Endothelial cell of umbilical vein (primary cell): ENCODE measurements at regions of chr6 and their contacts with region 1.

Region 1: DNA sequence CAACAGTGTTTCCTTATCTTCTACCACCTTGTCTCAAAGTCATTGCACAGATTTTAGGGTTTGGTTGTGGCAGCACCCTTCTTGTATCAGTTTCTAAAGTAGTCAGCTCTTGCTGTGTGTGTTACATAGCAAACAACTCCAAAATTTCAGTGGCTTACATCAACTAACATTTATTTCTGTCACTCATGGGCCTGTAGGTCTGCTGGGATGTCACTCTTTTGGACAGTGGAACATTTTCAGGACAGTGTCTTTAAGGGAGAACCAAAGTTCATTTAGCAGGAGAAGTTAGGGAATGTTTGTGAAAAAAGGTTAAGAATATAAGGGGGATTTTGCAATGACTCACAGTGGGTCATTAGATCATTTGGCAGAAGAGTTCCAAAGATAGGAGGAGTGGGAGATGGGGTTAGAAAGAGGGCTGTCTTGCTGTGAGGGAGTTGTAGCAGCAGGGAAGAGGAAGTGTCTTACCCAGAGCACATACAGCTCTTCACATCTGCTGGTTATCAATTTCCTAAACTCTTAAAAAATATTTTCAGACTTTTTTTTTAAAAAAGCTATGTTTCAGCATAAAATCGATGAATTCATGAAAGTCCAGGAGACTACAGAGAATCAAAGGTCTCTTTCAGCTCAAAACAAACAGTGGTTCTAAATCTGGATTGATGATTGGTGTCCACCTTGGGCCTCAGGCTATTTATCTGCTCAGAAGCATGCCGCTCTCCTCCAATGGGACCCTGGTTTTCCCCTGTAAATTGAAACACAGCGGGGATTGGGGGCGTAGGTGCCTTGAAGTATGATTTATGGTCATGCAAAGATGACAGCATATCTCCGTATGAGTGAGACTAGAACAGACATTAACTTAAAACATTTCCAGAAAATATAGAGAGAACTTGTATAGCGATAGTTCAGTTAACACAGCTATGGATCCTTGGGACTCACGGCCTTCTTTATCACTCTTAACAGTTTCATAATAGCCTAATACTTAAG is 117.3 kb downstream of the B3GAT2 start:
- DNase-seq: no peak
- H3K4me3 ChIP-seq: no peak overlapping the region
- H3K27ac ChIP-seq: no peak overlapping the region
- H3K4me1 ChIP-seq: no peaks in the 10 kb centered on the region
- H3K27me3 ChIP-seq: no peaks in the 10 kb centered on the region
- CTCF ChIP-seq: no peak
- POLR2A ChIP-seq: no peak

Region 2: DNA sequence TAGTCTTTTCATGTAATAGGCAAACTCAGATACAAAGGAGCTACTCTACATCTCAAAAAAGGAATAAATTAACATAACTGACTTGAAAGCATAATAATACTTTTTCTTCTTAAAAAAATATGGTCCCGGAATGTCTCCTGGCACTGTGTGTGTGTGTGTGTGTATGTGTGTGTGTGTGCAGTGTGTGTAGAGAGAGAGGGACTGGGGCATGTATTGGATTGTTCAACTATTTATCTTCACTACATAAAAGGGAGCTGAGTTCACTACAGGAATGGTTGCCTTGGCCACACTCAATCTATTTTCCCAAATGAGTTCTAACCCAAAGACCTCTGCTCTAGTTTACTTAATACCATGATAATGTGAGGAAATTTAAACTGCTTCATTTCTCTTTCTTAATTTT is 66.2 kb after region 1 on chr6:
- CTCF ChIA-PET with region 1: no interaction called
- POLR2A ChIA-PET with region 1: no interaction called
- dilution Hi-C with region 1: no loop called
- intact Hi-C with region 1: no loop called
- DNase-seq: no peak
- H3K4me3 ChIP-seq: no peak overlapping the region
- H3K27ac ChIP-seq: no peak overlapping the region
- H3K4me1 ChIP-seq: no peaks in the 10 kb centered on the region
- H3K27me3 ChIP-seq: no peaks in the 10 kb centered on the region
- CTCF ChIP-seq: no peak
- POLR2A ChIP-seq: no peak

Region 3: DNA sequence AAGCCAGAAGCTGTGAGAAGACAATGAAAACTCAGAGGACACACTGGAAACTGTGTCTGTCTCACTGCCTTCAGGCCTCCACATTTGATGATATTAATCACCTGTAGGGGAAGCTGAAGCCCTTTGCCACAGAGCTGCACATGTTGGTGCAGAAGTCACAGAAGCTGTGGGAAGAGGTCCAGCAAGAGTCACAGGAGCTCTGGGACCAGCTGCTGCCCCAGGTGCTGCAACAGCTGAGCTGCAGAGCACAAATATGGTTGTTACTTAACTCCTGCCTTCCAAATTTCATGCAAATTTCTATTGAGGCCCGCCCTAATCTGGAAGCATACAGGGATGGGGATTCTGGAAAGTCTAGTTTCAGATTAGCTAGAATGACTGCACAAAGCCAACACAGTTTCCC is 618.4 kb after region 1 on chr6:
- CTCF ChIA-PET with region 1: no interaction called
- POLR2A ChIA-PET with region 1: no interaction called
- dilution Hi-C with region 1: no loop called
- intact Hi-C with region 1: loop called (anchors 10 kb)
- DNase-seq: no peak
- H3K4me3 ChIP-seq: no peak overlapping the region
- H3K27ac ChIP-seq: no peak overlapping the region
- H3K4me1 ChIP-seq: no peaks in the 10 kb centered on the region
- H3K27me3 ChIP-seq: no peaks in the 10 kb centered on the region
- CTCF ChIP-seq: no peak
- POLR2A ChIP-seq: no peak